A673 (cell line): ENCODE measurements at regions of chr16 and their contacts with region 1.

Region 1: DNA sequence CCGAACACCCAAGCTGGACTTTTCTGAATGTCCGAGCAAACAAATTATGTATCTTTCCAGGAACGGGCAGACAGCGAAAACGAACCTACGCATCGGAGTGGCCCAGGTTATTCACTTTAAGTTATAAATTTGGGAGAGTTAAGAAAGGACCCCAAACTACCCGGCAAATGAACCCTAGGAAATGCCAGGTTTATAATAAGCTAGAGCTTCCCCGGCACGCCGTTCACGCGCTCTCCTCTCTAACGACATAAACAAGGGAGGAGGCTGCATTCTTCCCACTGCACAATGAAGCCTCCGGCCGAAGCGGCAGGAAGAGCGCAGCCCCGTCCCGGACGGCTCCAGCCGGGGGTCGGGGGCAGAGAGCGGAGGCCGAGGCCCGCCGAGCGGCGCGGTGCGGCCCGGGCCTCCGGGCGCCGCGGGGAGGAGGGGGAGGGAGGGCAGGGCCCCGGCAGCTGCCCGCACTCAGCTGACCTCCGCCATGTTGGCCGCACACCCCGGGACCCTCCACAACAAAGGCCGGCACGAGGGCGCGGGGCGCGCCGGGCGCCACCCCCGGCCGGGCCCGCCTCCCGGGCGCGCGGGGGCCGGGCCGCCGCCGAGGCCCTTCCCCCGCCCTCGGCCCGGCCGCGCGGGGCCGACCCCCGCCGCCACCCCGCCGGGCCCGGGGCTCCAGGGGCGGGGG is 767 bp downstream of the SIAH1 start:
- DNase-seq: peak; percentile 43
- H3K4me3 ChIP-seq: peak overlapping the region; percentile 64
- H3K27ac ChIP-seq: peak overlapping the region; percentile 89
- H3K4me1 ChIP-seq: peaks cover 13% of the 10 kb centered on the region
- H3K27me3 ChIP-seq: no peaks in the 10 kb centered on the region
- CTCF ChIP-seq: no peak

Region 2: GRCh38 chr16:47970291-47970931 is 414.0 kb before region 1 on chr16:
- CTCF ChIA-PET with region 1: no interaction called
- POLR2A ChIA-PET with region 1: no interaction called
- intact Hi-C with region 1: no loop called
- DNase-seq: peak; percentile 57
- H3K4me3 ChIP-seq: no peak overlapping the region
- H3K27ac ChIP-seq: no peak overlapping the region
- H3K4me1 ChIP-seq: no peaks in the 10 kb centered on the region
- H3K27me3 ChIP-seq: peaks cover 14% of the 10 kb centered on the region
- CTCF ChIP-seq: no peak

Region 3: DNA sequence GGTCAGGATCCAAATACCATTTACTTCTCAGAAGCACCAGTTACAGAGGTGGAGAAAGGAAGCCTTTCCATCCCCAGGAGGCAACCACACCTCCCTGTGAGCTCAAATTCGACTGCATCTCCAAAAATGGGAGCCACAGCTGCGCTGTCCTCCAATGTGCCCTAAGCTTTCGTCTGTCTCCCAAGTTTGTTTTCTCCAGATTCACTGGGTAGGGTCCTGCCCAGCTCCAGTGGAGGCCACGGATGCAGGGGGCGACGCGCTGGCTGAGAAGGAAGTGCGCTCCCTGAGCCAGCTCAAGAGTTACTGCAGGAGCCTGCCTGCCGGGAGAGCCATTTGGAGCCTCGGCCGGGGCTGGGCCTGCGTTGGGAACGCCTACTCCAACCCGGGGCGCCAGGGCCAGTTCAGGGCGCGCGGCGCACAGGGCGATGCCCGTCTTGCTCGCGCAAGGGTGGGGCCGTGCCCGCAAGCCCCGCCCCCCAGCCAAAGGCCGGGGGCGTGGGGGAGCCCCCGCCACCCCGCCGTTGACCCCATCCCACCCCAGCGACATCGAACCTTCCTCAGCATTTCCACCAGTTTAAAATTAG is 18.8 kb before region 1 on chr16:
- CTCF ChIA-PET with region 1: interaction called, 11 read pairs
- POLR2A ChIA-PET with region 1: interaction called, 6 read pairs
- intact Hi-C with region 1: no loop called
- DNase-seq: peak; percentile 93
- H3K4me3 ChIP-seq: peak overlapping the region; percentile 55
- H3K27ac ChIP-seq: peak overlapping the region; percentile 91
- H3K4me1 ChIP-seq: peaks cover 44% of the 10 kb centered on the region
- H3K27me3 ChIP-seq: no peaks in the 10 kb centered on the region
- CTCF ChIP-seq: 0 out of 2 replicates have a peak, but pooled peaks have one; percentile 19